Right ventricle myocardium inferior (tissue), 1 donor: ENCODE measurements at regions of chr9 and their contacts with region 1.

Region 1: DNA sequence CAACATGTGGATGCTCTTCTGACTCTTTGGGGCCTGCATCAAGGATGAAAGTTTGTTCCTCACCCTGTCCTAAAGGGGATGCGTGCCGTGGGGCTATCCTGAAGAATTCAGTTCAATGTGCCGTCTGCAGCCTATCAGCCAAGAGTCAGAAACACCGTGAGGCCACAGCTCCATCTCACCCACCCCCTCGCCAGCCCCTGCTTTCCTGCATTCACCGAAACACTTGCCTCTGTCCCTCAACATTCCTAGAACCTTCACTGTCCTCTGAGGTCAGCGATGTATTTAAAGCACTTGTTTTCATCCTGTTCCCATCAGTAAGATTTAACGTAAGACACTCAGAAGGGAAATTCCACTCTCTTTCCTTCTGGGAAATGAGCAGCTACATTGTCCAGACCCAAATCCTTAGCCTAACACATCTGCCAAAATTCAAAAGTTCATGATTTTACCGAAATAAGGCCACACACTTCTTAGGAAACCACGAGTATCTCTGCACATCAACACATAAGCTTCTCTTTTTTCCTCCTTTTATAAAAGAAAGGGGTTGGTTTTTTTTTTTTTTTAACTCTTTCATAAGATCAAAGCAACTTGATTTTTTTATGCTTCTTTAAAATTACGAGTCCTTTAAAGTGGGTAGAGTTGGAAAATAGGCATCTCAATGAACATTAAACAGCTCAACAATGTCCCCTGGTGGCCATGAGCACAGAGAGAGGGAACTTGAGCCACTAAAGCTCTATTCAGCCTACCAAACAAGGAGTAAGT is 100.7 kb downstream of the SUSD1 start:
- DNase-seq: peak; percentile 70
- ATAC-seq: peak; percentile 84

Region 2: DNA sequence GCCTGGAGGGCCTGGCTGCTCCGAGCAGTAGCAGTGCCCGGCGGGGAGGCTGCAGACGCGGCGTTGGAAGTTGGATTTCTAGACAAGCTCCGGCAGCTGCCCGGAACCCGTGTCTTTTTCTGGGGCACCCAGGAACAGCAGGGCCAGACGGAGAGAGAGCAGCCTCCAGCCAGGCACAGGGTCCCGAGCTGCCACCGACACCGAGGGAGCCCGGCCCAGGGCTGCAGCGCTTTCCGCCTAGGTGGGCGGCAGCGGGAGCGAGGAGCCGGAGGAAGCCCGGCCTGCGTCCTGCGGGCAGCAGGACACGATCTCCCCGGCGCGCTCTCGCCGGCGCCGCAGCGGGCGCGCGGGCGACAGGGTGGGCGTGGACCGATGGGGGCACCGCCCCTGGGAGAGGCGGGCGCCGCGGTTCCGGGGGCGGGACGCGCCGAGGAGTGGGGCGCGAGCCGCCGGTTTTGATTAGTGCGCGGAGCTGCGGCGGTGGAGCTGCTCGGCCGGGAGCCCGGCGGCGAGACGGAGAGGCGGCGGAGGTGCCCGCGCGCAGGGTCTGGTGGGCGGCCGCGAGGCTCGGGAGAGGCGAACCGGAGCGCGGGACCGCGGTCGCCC is 178.0 kb before region 1 on chr9 and contains the start of gene UGCG:
- intact Hi-C with region 1: loop called (anchors 2 kb)
- DNase-seq: peak; percentile 95
- ATAC-seq: peak; percentile 99
- total RNA-seq, gene UGCG: 12.8 TPM

Region 3: DNA sequence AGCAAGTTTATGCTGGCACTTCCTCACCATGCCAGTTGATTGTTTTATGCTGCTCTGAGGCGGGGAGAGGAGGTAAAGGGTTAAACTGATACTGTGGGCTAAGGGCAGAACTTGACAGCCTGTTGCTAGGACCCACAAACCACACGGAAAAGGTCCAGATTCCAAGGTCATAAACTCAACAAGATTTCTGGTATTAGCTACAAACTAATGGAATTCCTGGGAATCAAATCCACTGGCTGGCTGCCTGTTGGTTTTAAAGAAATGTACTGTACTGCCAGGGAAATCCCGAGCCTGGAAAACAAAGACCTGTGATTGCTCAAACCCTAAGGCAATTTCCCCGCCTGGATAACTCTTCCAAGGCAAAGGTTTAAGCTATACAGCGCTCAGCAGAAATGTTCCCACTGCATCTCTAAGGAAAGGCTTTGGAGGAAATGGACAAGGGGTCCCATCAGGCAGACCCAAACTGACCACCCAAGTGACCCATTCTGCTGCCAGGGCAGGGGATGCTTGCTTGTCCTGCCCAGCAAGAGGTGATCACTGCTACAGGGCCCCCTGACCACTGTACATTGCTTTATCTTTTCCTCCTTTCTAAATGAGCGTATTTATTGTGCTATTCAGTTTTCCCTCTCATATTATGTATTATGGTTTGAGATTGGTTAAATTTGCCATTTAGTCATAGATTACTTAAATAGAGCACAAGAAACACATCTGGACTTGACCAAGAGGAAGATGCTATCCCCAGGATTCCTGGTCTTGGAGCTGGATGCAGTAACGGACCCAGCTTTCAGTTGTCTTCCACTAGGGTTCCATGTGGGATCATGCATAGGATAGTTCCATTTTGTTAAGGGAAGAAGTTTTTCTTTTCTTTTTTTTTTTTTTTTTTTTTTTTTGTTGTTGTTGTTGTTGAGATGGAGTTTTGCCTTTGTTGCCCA is 23.6 kb before region 1 on chr9:
- intact Hi-C with region 1: loop called (anchors 2 kb)
- DNase-seq: no peak
- ATAC-seq: peak; percentile 63